GM13976 (cell line): ENCODE measurements at regions of chr12 and their contacts with region 1.

Region 1: DNA sequence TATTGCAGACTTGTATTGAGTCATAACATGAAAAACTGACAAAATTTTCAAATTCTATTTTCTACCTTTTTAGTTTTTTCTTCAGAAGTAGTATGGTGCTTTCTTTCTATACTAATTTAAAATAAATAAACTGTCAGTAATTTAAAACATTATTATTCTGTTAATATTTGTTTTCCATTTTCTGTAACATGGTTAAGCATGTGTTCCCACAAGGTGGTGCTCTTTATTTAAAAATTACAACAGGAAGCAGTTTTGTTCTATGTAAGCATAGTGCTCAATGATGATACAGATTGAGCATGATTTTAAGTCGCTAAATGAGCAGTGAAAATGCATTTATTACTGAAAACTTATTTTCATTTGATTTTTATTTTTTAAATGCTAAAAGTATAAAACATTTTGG is 114.6 kb downstream of the PPFIA2 start:
- DNase-seq: peak; percentile 43
- CTCF ChIP-seq: no peak

Region 2: GRCh38 chr12:82057770-82058169 is 413.3 kb after region 1 on chr12:
- in situ Hi-C with region 1: no loop called
- DNase-seq: no peak
- CTCF ChIP-seq: no peak

Region 3: DNA sequence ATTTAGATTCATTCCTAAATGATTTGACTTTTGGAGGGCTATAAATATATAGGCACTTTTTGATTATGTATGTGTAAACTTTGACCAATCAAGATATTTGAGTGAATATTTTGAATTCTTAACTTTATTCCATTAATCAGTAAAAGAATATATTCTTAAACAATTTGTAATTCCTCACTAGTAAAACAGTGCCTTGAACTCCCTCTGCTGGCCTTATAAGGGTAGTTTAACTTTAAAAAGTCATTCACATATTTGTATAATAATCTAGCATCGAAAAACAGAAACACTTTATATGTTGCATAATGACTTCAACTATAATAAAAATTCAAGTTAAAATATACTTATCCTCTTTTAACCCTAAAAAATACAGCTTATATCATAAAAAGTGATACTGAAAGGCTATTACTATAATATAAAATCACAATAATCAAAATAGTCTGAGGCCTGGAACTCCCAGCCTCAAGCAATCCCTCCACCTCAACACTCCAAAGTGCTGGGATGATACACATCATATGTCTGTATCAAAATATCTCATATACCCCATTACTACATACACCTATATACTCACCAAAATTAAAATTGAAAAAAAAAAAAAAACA is 682.5 kb after region 1 on chr12:
- in situ Hi-C with region 1: loop called (anchors 25 kb)
- DNase-seq: peak; percentile 11
- CTCF ChIP-seq: peak; percentile 19